BJ (cell line): ENCODE measurements at regions of chr3 and their contacts with region 1.

Region 1: GRCh38 chr3:63993653-63994079 is 29.6 kb downstream of the PSMD6 start:
- DNase-seq: no peak
- H3K4me3 ChIP-seq: no peak overlapping the region
- H3K27me3 ChIP-seq: no peaks in the 10 kb centered on the region
- CTCF ChIP-seq: peak; percentile 98

Region 2: GRCh38 chr3:63961891-63962290 is 31.8 kb before region 1 on chr3:
- CTCF ChIA-PET with region 1: interaction called, 60 read pairs
- POLR2A ChIA-PET with region 1: no interaction called
- DNase-seq: no peak
- H3K4me3 ChIP-seq: no peak overlapping the region
- H3K27me3 ChIP-seq: no peaks in the 10 kb centered on the region
- CTCF ChIP-seq: peak; percentile 63

Region 3: DNA sequence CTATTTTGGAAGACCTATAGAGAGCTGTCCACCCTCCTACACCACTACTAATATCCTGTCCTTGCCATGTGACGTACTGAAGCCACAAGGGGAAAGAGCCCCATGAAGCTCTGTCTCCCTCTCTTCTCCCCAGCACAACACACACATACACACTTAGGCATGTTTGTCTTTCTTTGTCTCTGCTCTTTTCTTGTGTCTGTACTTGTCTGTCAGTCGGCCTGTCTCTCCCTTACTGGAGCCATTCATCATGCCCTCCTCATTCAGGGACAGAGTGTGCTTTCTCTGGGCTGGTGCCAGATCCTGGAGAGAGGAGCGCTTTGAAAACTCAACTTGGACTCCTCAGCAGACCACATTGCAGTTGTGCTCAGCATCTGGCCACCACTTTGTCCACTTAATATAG is 17.9 kb before region 1 on chr3:
- CTCF ChIA-PET with region 1: interaction called, 58 read pairs
- POLR2A ChIA-PET with region 1: interaction called, 18 read pairs
- DNase-seq: no peak
- H3K4me3 ChIP-seq: no peak overlapping the region
- H3K27me3 ChIP-seq: no peaks in the 10 kb centered on the region
- CTCF ChIP-seq: no peak

Region 4: GRCh38 chr3:63981980-63982379 is 11.7 kb before region 1 on chr3:
- CTCF ChIA-PET with region 1: interaction called, 58 read pairs
- POLR2A ChIA-PET with region 1: no interaction called
- DNase-seq: no peak
- H3K4me3 ChIP-seq: no peak overlapping the region
- H3K27me3 ChIP-seq: no peaks in the 10 kb centered on the region
- CTCF ChIP-seq: no peak